Mammary epithelial cell (primary cell): ENCODE measurements at regions of chr3 and their contacts with region 1.

Region 1: GRCh38 chr3:132569153-132569552 is 27.9 kb upstream of the ACKR4 start:
- DNase-seq: no peak
- H3K4me3 ChIP-seq: no peak overlapping the region
- H3K27ac ChIP-seq: no peak overlapping the region
- H3K4me1 ChIP-seq: no peaks in the 10 kb centered on the region
- H3K27me3 ChIP-seq: no peaks in the 10 kb centered on the region
- CTCF ChIP-seq: no peak

Region 2: DNA sequence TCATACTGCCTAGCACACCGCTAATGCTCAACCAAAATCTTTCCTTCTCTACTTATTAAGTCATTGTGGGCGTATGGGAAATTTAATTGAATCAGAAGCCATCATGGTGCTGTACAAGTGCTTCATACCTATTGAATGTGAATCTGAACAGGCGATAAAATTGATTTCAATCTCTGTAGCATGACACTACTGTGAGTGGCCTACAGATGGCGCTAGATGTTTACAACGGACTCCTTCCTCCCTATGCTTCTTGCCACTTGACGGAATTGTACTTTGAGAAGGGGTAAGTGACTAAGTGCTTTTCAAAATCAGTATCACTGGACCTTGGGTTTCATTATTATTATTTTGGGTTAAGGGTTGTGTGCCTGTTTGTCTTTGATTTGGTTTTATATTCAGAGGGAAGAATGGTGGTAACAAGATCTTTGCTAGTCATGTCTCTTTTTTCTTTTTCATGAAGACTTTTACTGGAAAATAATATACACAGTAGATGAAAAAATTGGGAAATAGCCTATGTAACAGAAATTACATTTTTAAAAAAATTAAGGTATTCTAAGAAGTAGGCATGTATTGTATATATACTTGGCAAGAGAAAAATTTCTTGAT is 216.5 kb before region 1 on chr3:
- CTCF ChIA-PET with region 1: no interaction called
- dilution Hi-C with region 1: no loop called
- in situ Hi-C with region 1: no loop called
- intact Hi-C with region 1: no loop called
- DNase-seq: peak; percentile 53
- H3K4me3 ChIP-seq: no peak overlapping the region
- H3K27ac ChIP-seq: no peak overlapping the region
- H3K4me1 ChIP-seq: peaks cover 3% of the 10 kb centered on the region
- H3K27me3 ChIP-seq: no peaks in the 10 kb centered on the region
- CTCF ChIP-seq: peak; percentile 91 to 92

Region 3: GRCh38 chr3:132595014-132595413 is 25.9 kb after region 1 on chr3:
- CTCF ChIA-PET with region 1: no interaction called
- dilution Hi-C with region 1: no loop called
- in situ Hi-C with region 1: no loop called
- intact Hi-C with region 1: no loop called
- DNase-seq: peak; percentile 57
- H3K4me3 ChIP-seq: no peak overlapping the region
- H3K27ac ChIP-seq: no peak overlapping the region
- H3K4me1 ChIP-seq: peaks cover 22% of the 10 kb centered on the region
- H3K27me3 ChIP-seq: no peaks in the 10 kb centered on the region
- CTCF ChIP-seq: no peak

Region 4: GRCh38 chr3:132659365-132660051 is 90.4 kb after region 1 on chr3 and contains the start of gene ACAD11:
- CTCF ChIA-PET with region 1: interaction called, 10 read pairs
- dilution Hi-C with region 1: no loop called
- in situ Hi-C with region 1: no loop called
- intact Hi-C with region 1: no loop called
- DNase-seq: peak; percentile 71
- H3K4me3 ChIP-seq: peak within 1 kb of the TSS; percentile 69 to 99 (median 93)
- H3K27ac ChIP-seq: peak within 1 kb of the TSS; percentile 86
- H3K4me1 ChIP-seq: peaks cover 5% of the 10 kb centered on the region
- H3K27me3 ChIP-seq: no peaks in the 10 kb centered on the region
- CTCF ChIP-seq: peak; percentile 66 to 70
- total RNA-seq, gene ACAD11: 24.9 to 32.2 TPM

Region 5: GRCh38 chr3:132756108-132756650 is 187.0 kb after region 1 on chr3:
- CTCF ChIA-PET with region 1: no interaction called
- dilution Hi-C with region 1: no loop called
- in situ Hi-C with region 1: no loop called
- intact Hi-C with region 1: no loop called
- DNase-seq: no peak
- H3K4me3 ChIP-seq: no peak overlapping the region
- H3K27ac ChIP-seq: no peak overlapping the region
- H3K4me1 ChIP-seq: no peaks in the 10 kb centered on the region
- H3K27me3 ChIP-seq: no peaks in the 10 kb centered on the region
- CTCF ChIP-seq: no peak